ENCODE measurements at regions of chr6 and their contacts with region 1.

Region 1: GRCh38 chr6:42453031-42453653 is 1.4 kb upstream of the TRERF1 start:
- DNase-seq: peak; percentile 65
- ATAC-seq: peak; percentile 65
- H3K4me3 ChIP-seq: peak overlapping the region; percentile 44 to 71 (median 68)
- H3K4me3 Mint-ChIP-seq: peak overlapping the region; percentile 98
- H3K27ac ChIP-seq: no peak overlapping the region
- H3K27ac Mint-ChIP-seq: no peak overlapping the region
- H3K4me1 ChIP-seq: peaks cover 28 to 32% of the 10 kb centered on the region in 2 donors
- H3K4me1 Mint-ChIP-seq: peaks cover 40% of the 10 kb centered on the region
- H3K27me3 ChIP-seq: peaks cover 0 to 44% (median 8%) of the 10 kb centered on the region in 4 experiments
- H3K27me3 Mint-ChIP-seq: peaks cover 14% of the 10 kb centered on the region
- CTCF ChIP-seq: no peak

Region 2: GRCh38 chr6:42390228-42390934 is 62.8 kb before region 1 on chr6:
- CTCF ChIA-PET with region 1: no interaction called
- POLR2A ChIA-PET with region 1: no interaction called
- intact Hi-C with region 1: loop called (anchors 10 kb)
- DNase-seq: peak; percentile 39
- ATAC-seq: peak; percentile 71
- H3K4me3 ChIP-seq: peak overlapping the region in 1 of 5 experiments; percentile 5
- H3K4me3 Mint-ChIP-seq: peak overlapping the region; percentile 73
- H3K27ac ChIP-seq: peak overlapping the region; percentile 50 to 63
- H3K27ac Mint-ChIP-seq: peak overlapping the region; percentile 87
- H3K4me1 ChIP-seq: peaks cover 4 to 33% of the 10 kb centered on the region in 2 donors
- H3K4me1 Mint-ChIP-seq: peaks cover 30% of the 10 kb centered on the region
- H3K27me3 ChIP-seq: no peaks in the 10 kb centered on the region
- H3K27me3 Mint-ChIP-seq: no peaks in the 10 kb centered on the region
- CTCF ChIP-seq: no peak

Measured in B cell (primary cell).